AG04449 (cell line): ENCODE measurements at regions of chr1 and their contacts with region 1.

Region 1: GRCh38 chr1:206912445-206913095 is 9.2 kb downstream of the FCMR start:
- DNase-seq: no peak
- H3K4me3 ChIP-seq: no peak overlapping the region
- CTCF ChIP-seq: peak; percentile 73

Region 2: GRCh38 chr1:206489980-206490770 is 422.4 kb before region 1 on chr1:
- CTCF ChIA-PET with region 1: interaction called, 14 read pairs
- POLR2A ChIA-PET with region 1: no interaction called
- DNase-seq: no peak
- H3K4me3 ChIP-seq: no peak overlapping the region
- CTCF ChIP-seq: peak; percentile 98

Region 3: GRCh38 chr1:206556750-206557635 is 355.6 kb before region 1 on chr1:
- CTCF ChIA-PET with region 1: no interaction called
- POLR2A ChIA-PET with region 1: no interaction called
- DNase-seq: no peak
- H3K4me3 ChIP-seq: peak overlapping the region; percentile 53
- CTCF ChIP-seq: no peak

Region 4: DNA sequence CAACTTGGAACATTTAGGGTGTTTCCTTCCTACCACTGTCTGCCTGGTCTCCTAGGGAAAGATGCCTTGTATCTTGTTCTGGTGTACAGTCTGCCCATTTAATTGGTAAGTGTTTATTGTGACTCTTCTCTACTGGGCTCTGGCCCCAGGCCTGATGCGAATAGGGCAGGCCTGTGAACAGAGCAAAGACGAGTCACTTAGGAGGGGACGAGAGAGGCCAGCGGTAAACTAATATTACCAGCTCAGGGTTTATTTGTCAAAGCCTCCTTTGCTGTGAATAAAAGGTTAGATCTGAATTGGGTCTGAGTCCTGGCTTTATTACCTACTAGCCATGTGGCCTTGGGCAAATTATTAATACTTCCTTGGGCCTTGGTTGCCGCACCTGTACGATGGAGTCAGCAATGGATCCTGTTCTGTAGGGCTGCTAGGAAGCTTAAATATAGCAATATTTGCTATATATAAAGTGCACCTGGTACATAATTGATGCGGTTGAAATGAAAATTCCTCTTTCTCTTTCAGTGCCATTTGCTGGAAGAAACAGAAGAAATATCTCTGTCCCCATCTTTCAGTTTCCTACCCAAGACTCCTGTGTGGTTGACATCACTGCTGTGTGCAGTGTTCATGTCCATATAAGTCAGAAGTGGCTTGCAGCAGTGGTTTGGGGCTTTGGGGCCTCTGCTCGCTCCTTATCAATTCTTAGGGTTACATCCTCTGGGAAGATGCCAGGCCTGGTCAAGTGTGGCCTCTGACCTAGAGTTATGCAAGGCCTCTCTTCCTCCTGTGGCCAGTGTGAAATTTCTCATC is 195.5 kb before region 1 on chr1:
- CTCF ChIA-PET with region 1: interaction called, 490 read pairs
- POLR2A ChIA-PET with region 1: no interaction called
- DNase-seq: no peak
- H3K4me3 ChIP-seq: no peak overlapping the region
- CTCF ChIP-seq: no peak

Region 5: GRCh38 chr1:206766251-206766856 is 146.2 kb before region 1 on chr1:
- CTCF ChIA-PET with region 1: interaction called, 22 read pairs
- POLR2A ChIA-PET with region 1: no interaction called
- DNase-seq: no peak
- H3K4me3 ChIP-seq: no peak overlapping the region
- CTCF ChIP-seq: no peak

Region 6: DNA sequence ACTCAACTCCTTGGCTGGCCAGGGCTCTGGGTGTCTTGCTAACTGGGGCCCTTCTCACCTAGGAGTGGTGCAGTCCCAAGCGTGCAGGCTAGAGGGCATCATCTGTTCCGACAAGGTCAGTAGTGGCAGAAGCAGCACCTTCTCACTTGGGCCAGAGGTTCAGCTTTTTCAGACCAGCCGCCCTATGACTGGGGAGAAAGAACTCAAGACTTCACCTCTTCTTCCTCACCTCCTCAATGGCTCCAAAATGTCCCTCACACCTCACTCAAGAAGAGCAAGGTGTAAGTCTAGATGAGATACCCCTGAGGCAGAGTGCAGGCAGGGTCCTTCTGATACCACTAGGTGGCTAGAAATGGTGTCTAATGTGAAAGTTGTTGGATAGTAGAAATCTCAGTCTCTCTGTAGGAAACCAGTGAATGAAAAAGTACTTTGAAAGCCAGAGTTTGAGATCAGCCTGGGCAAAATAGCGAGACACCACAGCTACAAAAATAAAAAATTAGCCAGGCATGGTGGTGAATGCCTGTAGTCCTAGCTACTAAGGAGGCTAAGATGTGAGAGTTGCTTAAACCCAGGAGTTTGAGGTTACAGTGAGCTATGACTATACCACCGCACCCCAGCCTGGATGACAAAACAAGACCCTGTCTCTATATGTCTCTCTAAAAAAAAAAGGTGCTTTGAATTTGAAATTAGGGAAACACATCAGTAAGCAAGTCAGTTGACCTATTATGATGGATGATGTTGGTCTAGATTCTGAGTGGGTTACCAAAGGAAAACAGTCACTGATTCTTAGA is 55.7 kb before region 1 on chr1:
- CTCF ChIA-PET with region 1: interaction called, 48 read pairs
- POLR2A ChIA-PET with region 1: no interaction called
- DNase-seq: no peak
- H3K4me3 ChIP-seq: no peak overlapping the region
- CTCF ChIP-seq: no peak

Region 7: GRCh38 chr1:206923009-206923960 is 10.7 kb after region 1 on chr1:
- CTCF ChIA-PET with region 1: interaction called, 38 read pairs
- POLR2A ChIA-PET with region 1: no interaction called
- DNase-seq: no peak
- H3K4me3 ChIP-seq: no peak overlapping the region
- CTCF ChIP-seq: no peak